ENCODE measurements at regions of chr1 and their contacts with region 1.

Region 1: GRCh38 chr1:109984456-109985275 is at the start of gene AHCYL1:
- DNase-seq: peak; percentile 99 to 100
- ATAC-seq: peak; percentile 98 to 99 (median 99)
- H3K4me3 ChIP-seq: peak within 1 kb of the TSS; percentile 89
- H3K4me3 Mint-ChIP-seq: peak within 1 kb of the TSS; percentile 88
- H3K27ac ChIP-seq: peak within 1 kb of the TSS; percentile 86
- H3K27ac Mint-ChIP-seq: peak within 1 kb of the TSS; percentile 83 to 99
- H3K4me1 ChIP-seq: peaks cover 19% of the 10 kb centered on the region
- H3K4me1 Mint-ChIP-seq: peaks cover 28 to 33% of the 10 kb centered on the region in 2 donors
- H3K27me3 ChIP-seq: peaks cover 5% of the 10 kb centered on the region
- H3K27me3 Mint-ChIP-seq: peaks cover 6% of the 10 kb centered on the region in 2 donors
- CTCF ChIP-seq: peak; percentile 90
- total RNA-seq, gene AHCYL1: 23.3 to 30.0 (median 29.1) TPM

Region 2: GRCh38 chr1:109548321-109549267 is 436.1 kb before region 1 on chr1 and contains the start of gene GNAI3:
- intact Hi-C with region 1: loop called (anchors 1 kb)
- DNase-seq: peak; percentile 91 to 98
- ATAC-seq: peak; percentile 88 to 98 (median 93)
- H3K4me3 ChIP-seq: peak within 1 kb of the TSS; percentile 89
- H3K4me3 Mint-ChIP-seq: peak within 1 kb of the TSS; percentile 94
- H3K27ac ChIP-seq: peak within 1 kb of the TSS; percentile 94
- H3K27ac Mint-ChIP-seq: peak within 1 kb of the TSS; percentile 91 to 98
- H3K4me1 ChIP-seq: peaks cover 5% of the 10 kb centered on the region
- H3K4me1 Mint-ChIP-seq: peaks cover 41 to 56% of the 10 kb centered on the region in 2 donors
- H3K27me3 ChIP-seq: no peaks in the 10 kb centered on the region
- H3K27me3 Mint-ChIP-seq: no peaks in the 10 kb centered on the region
- CTCF ChIP-seq: no peak
- total RNA-seq, gene GNAI3: 6.1 to 7.6 (median 6.9) TPM

Region 3: GRCh38 chr1:109643385-109644230 is 341.1 kb before region 1 on chr1:
- intact Hi-C with region 1: loop called (anchors 1 kb)
- DNase-seq: peak; percentile 83 to 90
- ATAC-seq: peak; percentile 91 to 94 (median 93)
- H3K4me3 ChIP-seq: no peak overlapping the region
- H3K4me3 Mint-ChIP-seq: no peak overlapping the region
- H3K27ac ChIP-seq: no peak overlapping the region
- H3K27ac Mint-ChIP-seq: peak overlapping the region in 1 of 2 donors; percentile 20
- H3K4me1 ChIP-seq: peaks cover 15% of the 10 kb centered on the region
- H3K4me1 Mint-ChIP-seq: peaks cover 4 to 10% of the 10 kb centered on the region in 2 donors
- H3K27me3 ChIP-seq: no peaks in the 10 kb centered on the region
- H3K27me3 Mint-ChIP-seq: peaks cover 0 to 3% of the 10 kb centered on the region in 2 donors
- CTCF ChIP-seq: peak; percentile 88

Region 4: GRCh38 chr1:109773146-109773899 is 211.3 kb before region 1 on chr1:
- intact Hi-C with region 1: loop called (anchors 1 kb)
- DNase-seq: peak in 1 of 2 donors; percentile 85
- ATAC-seq: peak; percentile 75 to 79 (median 76)
- H3K4me3 ChIP-seq: no peak overlapping the region
- H3K4me3 Mint-ChIP-seq: no peak overlapping the region
- H3K27ac ChIP-seq: no peak overlapping the region
- H3K27ac Mint-ChIP-seq: no peak overlapping the region
- H3K4me1 ChIP-seq: peaks cover 5% of the 10 kb centered on the region
- H3K4me1 Mint-ChIP-seq: peaks cover 0 to 8% of the 10 kb centered on the region in 2 donors
- H3K27me3 ChIP-seq: no peaks in the 10 kb centered on the region
- H3K27me3 Mint-ChIP-seq: peaks cover 23 to 27% of the 10 kb centered on the region in 2 donors
- CTCF ChIP-seq: peak; percentile 30

Region 5: DNA sequence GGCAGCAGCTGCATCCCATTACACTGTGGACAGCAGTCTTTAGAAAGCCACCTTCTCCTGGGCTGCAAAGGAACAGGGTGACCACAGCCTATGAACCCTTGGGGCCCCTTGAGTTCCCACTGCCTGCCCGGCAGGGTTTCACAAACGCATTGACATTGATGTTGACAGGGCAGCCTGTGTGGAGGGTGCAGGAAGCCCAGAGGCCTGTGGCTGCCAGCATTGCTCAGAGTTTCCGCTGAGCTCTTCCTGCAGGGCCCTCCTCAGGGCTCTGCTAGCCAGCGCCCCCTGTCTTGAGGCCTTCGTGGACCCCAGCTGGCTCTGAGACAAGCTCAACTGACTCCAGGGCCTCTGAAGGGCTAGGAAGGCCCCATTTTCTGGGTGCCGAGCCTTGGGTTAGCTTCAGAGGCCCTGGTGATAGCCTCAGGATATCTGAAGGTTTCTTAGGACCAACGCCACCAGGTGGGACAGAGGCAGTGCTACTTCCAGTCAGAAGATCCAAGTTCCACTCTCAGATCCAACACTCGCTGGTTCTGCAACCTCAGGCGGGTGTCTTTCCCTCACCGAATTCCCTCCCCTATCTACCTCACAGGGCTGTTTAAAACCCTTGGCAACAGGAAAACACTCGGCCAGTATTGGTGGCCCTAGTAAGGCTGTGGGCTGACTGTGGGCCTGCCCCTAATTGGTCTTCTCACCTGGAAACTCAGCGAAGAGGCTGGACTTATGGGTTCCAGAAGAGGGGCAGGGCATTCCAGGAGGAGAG is 193.8 kb before region 1 on chr1:
- intact Hi-C with region 1: loop called (anchors 1 kb)
- DNase-seq: peak; percentile 74 to 88
- ATAC-seq: peak; percentile 80 to 89 (median 81)
- H3K4me3 ChIP-seq: no peak overlapping the region
- H3K4me3 Mint-ChIP-seq: peak overlapping the region; percentile 42
- H3K27ac ChIP-seq: peak overlapping the region; percentile 54
- H3K27ac Mint-ChIP-seq: peak overlapping the region; percentile 41 to 79
- H3K4me1 ChIP-seq: peaks cover 76% of the 10 kb centered on the region
- H3K4me1 Mint-ChIP-seq: peaks cover 71 to 78% of the 10 kb centered on the region in 2 donors
- H3K27me3 ChIP-seq: peaks cover 7% of the 10 kb centered on the region
- H3K27me3 Mint-ChIP-seq: peaks cover 14 to 16% of the 10 kb centered on the region in 2 donors
- CTCF ChIP-seq: peak; percentile 74

Region 6: DNA sequence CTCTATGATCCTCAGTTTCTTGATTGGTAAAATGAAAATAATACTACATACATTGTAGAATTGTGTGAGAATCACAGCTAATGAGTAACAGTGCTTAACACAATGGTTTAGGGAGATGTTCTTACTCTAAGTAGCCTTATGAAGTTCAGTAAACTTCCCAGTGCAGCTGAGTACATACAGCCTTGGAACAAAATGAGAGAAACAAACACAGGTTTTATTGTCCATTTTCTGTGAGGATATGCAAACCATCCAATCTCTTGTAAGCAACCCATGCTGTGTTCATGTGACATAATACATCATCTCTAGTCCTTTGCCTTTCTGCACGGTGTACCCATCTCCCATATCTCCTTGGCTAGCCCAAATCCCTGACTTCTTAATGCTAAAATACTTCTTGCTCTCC is 35.1 kb after region 1 on chr1:
- intact Hi-C with region 1: no loop called
- DNase-seq: no peak
- ATAC-seq: no peak
- H3K4me3 ChIP-seq: no peak overlapping the region
- H3K4me3 Mint-ChIP-seq: no peak overlapping the region
- H3K27ac ChIP-seq: no peak overlapping the region
- H3K27ac Mint-ChIP-seq: no peak overlapping the region
- H3K4me1 ChIP-seq: no peaks in the 10 kb centered on the region
- H3K4me1 Mint-ChIP-seq: no peaks in the 10 kb centered on the region
- H3K27me3 ChIP-seq: no peaks in the 10 kb centered on the region
- H3K27me3 Mint-ChIP-seq: no peaks in the 10 kb centered on the region
- CTCF ChIP-seq: no peak

Region 7: DNA sequence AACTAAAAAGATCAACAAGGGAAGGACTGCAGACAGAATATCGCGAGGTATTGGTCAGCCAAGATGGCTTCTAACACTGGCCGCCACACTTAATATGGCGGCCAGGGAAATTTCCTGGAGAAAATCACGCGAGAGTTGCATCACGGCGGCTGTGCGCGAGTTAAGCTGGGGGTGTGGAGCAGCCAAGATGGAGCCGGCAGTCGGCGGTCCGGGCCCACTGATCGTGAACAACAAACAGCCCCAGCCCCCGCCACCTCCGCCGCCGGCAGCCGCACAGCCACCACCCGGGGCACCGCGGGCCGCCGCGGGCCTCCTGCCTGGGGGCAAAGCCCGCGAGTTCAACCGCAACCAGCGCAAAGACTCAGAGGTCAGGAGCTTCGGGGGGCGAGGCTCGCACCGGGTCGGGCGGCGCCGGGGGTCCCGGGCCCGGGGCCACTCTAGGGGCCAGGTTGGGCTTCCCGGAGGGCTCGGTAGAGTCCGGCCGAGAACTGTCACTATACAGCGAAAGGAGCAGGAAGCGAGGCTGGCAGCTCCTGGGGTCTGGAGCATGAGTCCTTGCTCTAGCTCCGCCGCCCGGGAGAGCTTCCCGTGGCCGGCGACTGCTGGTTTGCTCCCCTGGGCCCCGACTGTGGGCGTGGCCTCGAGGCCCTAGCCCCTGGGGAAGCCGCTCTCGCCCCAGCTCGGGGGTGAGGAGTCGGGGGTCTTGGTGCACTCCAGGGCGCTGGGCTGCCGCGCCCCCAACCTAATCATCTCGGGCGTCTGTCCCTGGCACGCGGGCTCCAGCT is 50.0 kb after region 1 on chr1 and contains the start of gene STRIP1:
- intact Hi-C with region 1: loop called (anchors 1 kb)
- DNase-seq: peak; percentile 87 to 97
- ATAC-seq: peak; percentile 92 to 97 (median 95)
- H3K4me3 ChIP-seq: peak within 1 kb of the TSS; percentile 76
- H3K4me3 Mint-ChIP-seq: peak within 1 kb of the TSS; percentile 94
- H3K27ac ChIP-seq: peak within 1 kb of the TSS; percentile 80
- H3K27ac Mint-ChIP-seq: peak within 1 kb of the TSS; percentile 93 to 96
- H3K4me1 ChIP-seq: peaks cover 25% of the 10 kb centered on the region
- H3K4me1 Mint-ChIP-seq: peaks cover 35 to 39% of the 10 kb centered on the region in 2 donors
- H3K27me3 ChIP-seq: no peaks in the 10 kb centered on the region
- H3K27me3 Mint-ChIP-seq: no peaks in the 10 kb centered on the region
- CTCF ChIP-seq: no peak
- total RNA-seq, gene STRIP1: 92.4 to 139 (median 130) TPM